Naive thymus-derived CD4-positive, alpha-beta T cell (primary cell): ENCODE measurements at regions of chr9 and their contacts with region 1.

Region 1: GRCh38 chr9:6412487-6413364 is at the start of gene UHRF2:
- DNase-seq: peak; percentile 88 to 99 (median 97)
- ATAC-seq: peak; percentile 93
- H3K4me3 ChIP-seq: peak within 1 kb of the TSS; percentile 67
- H3K4me3 Mint-ChIP-seq: peak within 1 kb of the TSS; percentile 80 to 98 (median 92)
- H3K27ac ChIP-seq: peak within 1 kb of the TSS; percentile 86
- H3K27ac Mint-ChIP-seq: peak within 1 kb of the TSS; percentile 87 to 98 (median 95)
- H3K4me1 ChIP-seq: peaks cover 20 to 26% of the 10 kb centered on the region in 2 donors
- H3K4me1 Mint-ChIP-seq: peaks cover 23 to 41% (median 35%) of the 10 kb centered on the region in 7 donors
- H3K27me3 ChIP-seq: no peaks in the 10 kb centered on the region
- H3K27me3 Mint-ChIP-seq: peaks cover 0 to 9% (median 0%) of the 10 kb centered on the region in 5 donors
- total RNA-seq, gene UHRF2: 78.7 to 117 (median 111) TPM

Region 2: DNA sequence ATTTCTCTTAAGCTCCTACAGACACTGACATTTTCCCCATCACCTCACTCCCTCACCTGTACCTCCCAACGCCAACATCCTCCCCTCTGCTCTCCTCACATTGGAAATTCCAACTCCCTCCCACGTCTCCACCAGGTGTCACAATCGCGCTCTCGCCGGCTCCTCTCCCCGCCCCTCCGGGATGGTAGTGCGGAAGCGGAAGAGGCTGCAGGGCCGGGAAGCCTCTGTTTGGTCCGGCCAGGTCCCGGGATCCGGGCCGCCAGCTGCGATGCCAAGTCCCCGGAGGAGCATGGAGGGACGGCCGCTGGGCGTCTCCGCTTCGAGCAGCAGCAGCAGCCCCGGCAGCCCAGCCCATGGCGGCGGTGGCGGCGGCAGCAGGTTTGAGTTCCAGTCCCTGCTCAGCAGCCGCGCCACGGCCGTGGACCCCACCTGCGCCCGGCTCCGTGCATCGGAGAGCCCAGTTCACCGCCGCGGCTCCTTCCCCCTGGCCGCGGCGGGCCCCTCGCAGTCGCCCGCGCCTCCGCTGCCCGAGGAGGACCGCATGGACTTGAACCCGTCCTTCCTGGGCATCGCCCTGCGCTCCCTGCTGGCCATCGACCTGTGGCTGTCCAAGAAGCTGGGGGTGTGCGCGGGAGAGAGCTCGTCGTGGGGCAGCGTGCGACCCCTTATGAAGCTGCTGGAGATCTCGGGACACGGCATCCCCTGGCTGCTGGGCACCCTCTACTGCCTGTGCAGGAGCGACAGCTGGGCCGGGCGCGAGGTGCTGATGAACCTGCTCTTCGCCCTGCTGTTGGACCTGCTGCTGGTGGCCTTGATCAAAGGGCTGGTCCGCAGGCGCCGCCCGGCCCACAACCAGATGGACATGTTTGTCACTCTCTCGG is 1750.4 kb before region 1 on chr9 and contains the start of gene PLPP6:
- CTCF ChIA-PET with region 1: no interaction called
- POLR2A ChIA-PET with region 1: no interaction called
- intact Hi-C with region 1: loop called in 1 of 2 experiments (anchors 10 kb)
- DNase-seq: peak; percentile 55 to 81 (median 76)
- ATAC-seq: peak; percentile 86
- H3K4me3 ChIP-seq: peak within 1 kb of the TSS; percentile 63
- H3K4me3 Mint-ChIP-seq: peak within 1 kb of the TSS; percentile 89 to 98 (median 96)
- H3K27ac ChIP-seq: peak within 1 kb of the TSS; percentile 78
- H3K27ac Mint-ChIP-seq: peak within 1 kb of the TSS; percentile 85 to 98 (median 95)
- H3K4me1 ChIP-seq: peaks cover 21 to 50% of the 10 kb centered on the region in 2 donors
- H3K4me1 Mint-ChIP-seq: peaks cover 41 to 80% (median 64%) of the 10 kb centered on the region in 7 donors
- H3K27me3 ChIP-seq: no peaks in the 10 kb centered on the region
- H3K27me3 Mint-ChIP-seq: peaks cover 0 to 12% (median 0%) of the 10 kb centered on the region in 5 donors
- total RNA-seq, gene PLPP6: 7.4 to 24.1 (median 10.2) TPM

Region 3: GRCh38 chr9:5389109-5389732 is 1023.5 kb before region 1 on chr9:
- CTCF ChIA-PET with region 1: no interaction called
- POLR2A ChIA-PET with region 1: no interaction called
- intact Hi-C with region 1: no loop called
- DNase-seq: peak in 1 of 9 donors; percentile 26
- ATAC-seq: peak; percentile 58
- H3K4me3 ChIP-seq: no peak overlapping the region
- H3K4me3 Mint-ChIP-seq: no peak overlapping the region
- H3K27ac ChIP-seq: no peak overlapping the region
- H3K27ac Mint-ChIP-seq: no peak overlapping the region
- H3K4me1 ChIP-seq: peaks cover 0 to 9% of the 10 kb centered on the region in 2 donors
- H3K4me1 Mint-ChIP-seq: peaks cover 0 to 22% (median 16%) of the 10 kb centered on the region in 7 donors
- H3K27me3 ChIP-seq: no peaks in the 10 kb centered on the region
- H3K27me3 Mint-ChIP-seq: no peaks in the 10 kb centered on the region

Region 4: DNA sequence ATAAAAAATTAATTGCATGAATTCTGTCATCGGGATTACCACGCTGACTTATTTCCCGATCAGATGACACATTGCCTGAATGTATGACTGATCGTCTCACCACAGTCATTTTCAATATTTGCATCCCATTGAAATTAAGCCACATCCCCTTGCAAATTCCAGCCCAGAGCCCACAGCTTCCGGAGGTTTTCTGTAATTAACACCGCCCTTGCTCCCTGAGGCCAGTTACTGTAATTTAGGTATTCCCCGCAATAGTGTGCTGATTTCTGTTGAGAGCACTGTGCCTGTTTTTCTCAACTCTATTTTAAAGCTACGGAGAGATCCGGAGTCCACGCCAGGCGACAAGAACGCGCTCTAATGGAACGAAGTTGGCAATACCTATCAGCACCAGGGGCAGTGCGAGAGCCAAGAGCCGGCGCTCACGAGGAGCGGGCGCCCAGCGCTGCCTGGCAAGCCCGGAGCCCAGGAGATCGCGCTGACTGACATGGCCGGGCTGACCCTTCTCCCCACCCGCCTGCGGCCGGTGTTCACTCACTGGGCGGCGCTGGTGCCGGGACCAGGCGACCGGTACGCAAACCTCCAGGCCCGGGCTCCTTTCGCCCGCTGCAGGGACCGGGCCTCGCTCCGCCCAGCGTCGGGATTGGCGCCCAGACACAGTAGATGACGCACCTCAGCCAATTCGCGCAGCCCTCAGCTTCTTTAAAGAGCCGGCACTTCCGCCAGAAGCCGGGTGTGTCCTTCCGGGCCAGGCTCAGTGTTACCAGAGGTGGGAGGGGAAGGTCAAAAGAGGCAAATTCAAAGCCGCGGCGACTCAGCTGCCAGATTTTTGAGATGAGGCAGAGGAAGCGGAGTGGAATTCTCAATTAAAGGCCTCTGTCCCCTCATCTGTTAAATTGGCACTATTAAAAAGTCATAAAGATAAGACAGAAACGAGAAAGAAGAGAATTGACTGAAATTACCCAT is 975.2 kb before region 1 on chr9 and contains the start of gene PLGRKT:
- CTCF ChIA-PET with region 1: no interaction called
- POLR2A ChIA-PET with region 1: no interaction called
- intact Hi-C with region 1: loop called in 1 of 2 experiments (anchors 2 kb)
- DNase-seq: peak; percentile 77 to 91 (median 89)
- ATAC-seq: peak; percentile 96
- H3K4me3 ChIP-seq: peak within 1 kb of the TSS; percentile 84
- H3K4me3 Mint-ChIP-seq: peak within 1 kb of the TSS; percentile 86 to 98 (median 96)
- H3K27ac ChIP-seq: peak within 1 kb of the TSS; percentile 81
- H3K27ac Mint-ChIP-seq: peak within 1 kb of the TSS; percentile 90 to 100 (median 98)
- H3K4me1 ChIP-seq: peaks cover 18 to 19% of the 10 kb centered on the region in 2 donors
- H3K4me1 Mint-ChIP-seq: peaks cover 7 to 50% (median 36%) of the 10 kb centered on the region in 7 donors
- H3K27me3 ChIP-seq: no peaks in the 10 kb centered on the region
- H3K27me3 Mint-ChIP-seq: no peaks in the 10 kb centered on the region
- total RNA-seq, gene PLGRKT: 15.8 to 31.7 (median 16.8) TPM

Region 5: DNA sequence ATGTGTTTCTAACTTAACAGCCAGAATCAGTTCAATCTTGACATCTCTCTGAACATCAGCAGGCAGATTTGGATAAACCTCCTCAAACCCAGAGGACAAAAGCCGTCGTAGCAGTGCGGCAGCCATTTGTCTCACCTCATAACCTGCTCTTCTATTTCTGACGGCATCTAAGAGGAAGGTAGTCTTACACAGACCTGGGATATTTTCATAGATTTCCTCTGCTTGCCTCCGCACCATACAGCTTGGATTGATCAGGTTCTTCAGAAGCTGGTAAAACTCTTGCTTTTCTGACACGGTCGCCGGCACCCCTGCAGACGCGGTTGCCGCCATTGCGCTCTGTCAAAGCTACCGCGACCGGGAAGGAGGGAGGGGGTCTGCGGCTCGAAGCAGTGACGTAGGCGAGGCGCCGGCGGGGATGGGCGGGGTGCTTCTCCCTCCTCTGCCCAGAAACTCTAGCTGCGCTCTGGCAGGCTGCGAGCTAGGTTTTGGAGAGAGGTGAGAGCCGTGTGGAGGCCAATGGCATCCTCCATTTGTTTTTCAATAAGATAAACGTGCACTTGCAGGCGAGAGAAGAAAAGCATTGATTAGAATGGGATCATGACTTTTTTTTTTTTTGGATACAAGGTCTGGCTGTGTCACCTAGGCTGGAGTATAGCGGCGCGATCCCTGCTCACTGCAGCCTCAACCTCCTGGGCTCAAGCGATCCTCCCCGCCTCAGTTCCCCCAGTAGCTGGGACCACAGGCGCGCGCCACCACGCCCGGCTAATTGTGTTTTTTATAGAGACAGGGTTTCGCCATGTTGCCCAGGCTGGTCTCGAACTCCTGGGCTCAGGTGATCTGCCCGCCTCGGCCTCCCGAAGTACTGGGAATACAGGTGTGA is 397.2 kb before region 1 on chr9 and contains the start of gene RANBP6:
- CTCF ChIA-PET with region 1: no interaction called
- POLR2A ChIA-PET with region 1: interaction called, 10 read pairs
- intact Hi-C with region 1: no loop called
- DNase-seq: peak; percentile 81 to 92 (median 91)
- ATAC-seq: peak; percentile 100
- H3K4me3 ChIP-seq: peak within 1 kb of the TSS; percentile 65
- H3K4me3 Mint-ChIP-seq: peak within 1 kb of the TSS; percentile 91 to 99 (median 96)
- H3K27ac ChIP-seq: peak within 1 kb of the TSS; percentile 75
- H3K27ac Mint-ChIP-seq: peak within 1 kb of the TSS; percentile 91 to 100 (median 99)
- H3K4me1 ChIP-seq: peaks cover 8 to 11% of the 10 kb centered on the region in 2 donors
- H3K4me1 Mint-ChIP-seq: peaks cover 13 to 49% (median 38%) of the 10 kb centered on the region in 7 donors
- H3K27me3 ChIP-seq: no peaks in the 10 kb centered on the region
- H3K27me3 Mint-ChIP-seq: no peaks in the 10 kb centered on the region
- total RNA-seq, gene RANBP6: 21.9 to 34.3 (median 30.3) TPM

Region 6: DNA sequence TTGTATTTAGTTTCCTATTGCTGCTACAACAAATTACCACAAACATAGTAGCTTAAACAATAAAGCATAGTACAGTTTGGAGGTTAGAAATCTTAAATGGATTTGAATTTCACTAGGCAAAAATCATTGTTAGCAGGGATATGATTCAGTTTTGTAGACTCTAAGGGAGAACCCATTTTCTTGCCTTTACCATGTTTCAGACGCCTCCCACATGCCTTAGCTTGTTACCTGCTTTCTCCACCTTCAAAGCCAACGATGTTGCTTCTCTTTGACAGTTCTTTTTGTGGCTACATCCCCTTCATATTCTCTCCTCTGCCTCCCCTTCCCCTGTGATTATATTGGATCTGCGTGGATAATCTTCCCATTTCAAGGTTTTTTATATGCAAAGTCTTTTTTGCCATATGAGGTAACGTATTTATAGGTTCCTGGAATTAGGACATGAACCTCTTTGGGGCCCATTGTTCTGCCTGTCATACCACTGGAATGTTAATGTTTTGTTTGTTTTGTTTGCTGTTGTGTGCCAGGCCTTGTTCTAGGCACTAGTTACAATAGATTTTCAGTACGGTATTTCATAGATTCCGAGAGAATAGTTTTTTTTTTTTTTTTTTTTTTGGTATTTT is 54.4 kb after region 1 on chr9:
- CTCF ChIA-PET with region 1: no interaction called
- POLR2A ChIA-PET with region 1: interaction called, 10 read pairs
- intact Hi-C with region 1: loop called (anchors 5 kb)
- DNase-seq: no peak
- ATAC-seq: no peak
- H3K4me3 ChIP-seq: no peak overlapping the region
- H3K4me3 Mint-ChIP-seq: no peak overlapping the region
- H3K27ac ChIP-seq: no peak overlapping the region
- H3K27ac Mint-ChIP-seq: peak overlapping the region in 6 of 9 donors; percentile 4 to 80 (median 38)
- H3K4me1 ChIP-seq: no peaks in the 10 kb centered on the region
- H3K4me1 Mint-ChIP-seq: peaks cover 8 to 52% (median 35%) of the 10 kb centered on the region in 7 donors
- H3K27me3 ChIP-seq: no peaks in the 10 kb centered on the region
- H3K27me3 Mint-ChIP-seq: no peaks in the 10 kb centered on the region

Region 7: DNA sequence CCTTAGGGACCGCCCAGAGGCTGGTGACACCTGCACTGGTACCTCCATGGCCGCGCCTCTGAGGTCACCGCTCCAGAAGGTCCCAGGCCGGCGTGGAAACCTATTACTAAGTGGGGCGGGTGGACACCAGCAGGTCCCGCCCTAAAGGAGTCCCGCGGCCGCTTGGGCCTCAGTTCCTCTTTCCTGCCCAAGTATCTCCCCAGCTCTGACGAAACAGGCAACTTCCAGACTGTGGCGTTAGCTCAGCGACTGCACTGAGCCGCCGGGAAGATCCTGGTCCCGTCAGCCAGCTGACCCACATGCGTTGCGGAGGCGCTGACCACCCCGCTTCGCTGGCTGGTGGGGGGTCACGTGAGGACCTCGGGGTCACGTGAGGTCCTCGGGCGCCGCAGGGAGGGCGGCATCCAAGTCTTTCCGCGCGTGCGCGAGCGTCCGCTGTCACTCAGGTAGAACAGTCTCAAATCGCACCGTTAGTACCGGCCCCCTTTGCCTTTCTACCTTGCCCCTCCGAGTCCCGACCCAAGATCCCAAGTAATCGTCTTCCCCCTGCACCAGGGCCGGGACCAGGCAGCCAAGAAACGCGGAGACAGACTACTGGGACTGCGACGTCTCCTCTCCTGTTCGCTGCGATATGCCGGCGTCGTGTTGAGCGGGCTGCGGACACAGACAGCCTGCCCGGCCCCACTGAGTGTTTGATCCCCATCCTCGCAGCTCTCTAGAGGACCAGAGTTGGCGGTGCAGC is 291.3 kb after region 1 on chr9:
- CTCF ChIA-PET with region 1: no interaction called
- POLR2A ChIA-PET with region 1: interaction called, 4 read pairs
- intact Hi-C with region 1: loop called (anchors 2 to 5 kb)
- DNase-seq: peak; percentile 70 to 86 (median 77)
- ATAC-seq: peak; percentile 90
- H3K4me3 ChIP-seq: peak overlapping the region; percentile 98
- H3K4me3 Mint-ChIP-seq: peak overlapping the region; percentile 82 to 98 (median 95)
- H3K27ac ChIP-seq: peak overlapping the region; percentile 97
- H3K27ac Mint-ChIP-seq: peak overlapping the region; percentile 91 to 98 (median 93)
- H3K4me1 ChIP-seq: no peaks in the 10 kb centered on the region
- H3K4me1 Mint-ChIP-seq: peaks cover 3 to 15% (median 6%) of the 10 kb centered on the region in 7 donors
- H3K27me3 ChIP-seq: no peaks in the 10 kb centered on the region
- H3K27me3 Mint-ChIP-seq: peaks cover 0 to 3% (median 0%) of the 10 kb centered on the region in 5 donors